GM23248 (cell line): ENCODE measurements at regions of chr13 and their contacts with region 1.

Region 1: GRCh38 chr13:51729866-51730546 is 74.0 kb downstream of the DHRS12 start:
- DNase-seq: peak; percentile 93
- H3K4me3 ChIP-seq: peak overlapping the region; percentile 52
- H3K27ac ChIP-seq: peak overlapping the region; percentile 100
- H3K4me1 ChIP-seq: peaks cover 82% of the 10 kb centered on the region
- H3K27me3 ChIP-seq: no peaks in the 10 kb centered on the region

Region 2: DNA sequence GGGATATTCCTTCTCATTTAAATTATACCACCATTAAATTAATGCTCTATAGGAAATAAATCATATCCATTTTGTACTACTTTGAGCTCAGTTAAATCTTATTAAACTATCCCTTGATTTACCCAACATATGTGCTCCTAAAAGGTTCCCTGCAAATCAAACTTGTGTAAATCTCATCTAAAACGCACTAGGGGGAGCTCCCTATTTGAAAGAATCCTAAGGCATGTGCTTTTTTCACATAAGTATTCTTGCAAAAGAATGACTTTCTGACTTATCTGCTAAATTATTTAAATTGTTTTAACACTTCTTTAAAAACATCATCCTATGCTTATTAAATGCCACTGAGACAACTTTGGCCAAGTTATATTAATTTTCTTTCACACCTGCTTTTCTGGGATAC is 285.1 kb before region 1 on chr13:
- in situ Hi-C with region 1: loop called (anchors 10 kb)
- DNase-seq: peak; percentile 67
- H3K4me3 ChIP-seq: no peak overlapping the region
- H3K27ac ChIP-seq: no peak overlapping the region
- H3K4me1 ChIP-seq: peaks cover 8% of the 10 kb centered on the region; the same call in 1 of the 2 replicates
- H3K27me3 ChIP-seq: no peaks in the 10 kb centered on the region